Activated B cell treated with CpG ODN at 0.5 μM for 24 hours (primary cell): ENCODE measurements at regions of chr19 and their contacts with region 1.

Region 1: GRCh38 chr19:38335949-38336637 is 463 bp downstream of the CATSPERG start:
- DNase-seq: peak; percentile 91
- ATAC-seq: peak; percentile 64
- H3K4me3 Mint-ChIP-seq: peak overlapping the region; percentile 91
- H3K27ac Mint-ChIP-seq: peak overlapping the region; percentile 97
- H3K4me1 Mint-ChIP-seq: peaks cover 8% of the 10 kb centered on the region
- H3K27me3 Mint-ChIP-seq: no peaks in the 10 kb centered on the region
- CTCF ChIP-seq: no peak

Region 2: GRCh38 chr19:37920591-37921450 is 415.3 kb before region 1 on chr19:
- CTCF ChIA-PET with region 1: no interaction called
- POLR2A ChIA-PET with region 1: interaction called, 10 read pairs
- intact Hi-C with region 1: no loop called
- DNase-seq: no peak
- ATAC-seq: peak; percentile 20
- H3K4me3 Mint-ChIP-seq: peak overlapping the region; percentile 78
- H3K27ac Mint-ChIP-seq: peak overlapping the region; percentile 90
- H3K4me1 Mint-ChIP-seq: peaks cover 82% of the 10 kb centered on the region
- H3K27me3 Mint-ChIP-seq: no peaks in the 10 kb centered on the region
- CTCF ChIP-seq: no peak

Region 3: GRCh38 chr19:38229585-38230073 is 106.5 kb before region 1 on chr19:
- CTCF ChIA-PET with region 1: interaction called, 14 read pairs
- POLR2A ChIA-PET with region 1: interaction called, 3 read pairs
- intact Hi-C with region 1: loop called (anchors 1 kb)
- DNase-seq: peak; percentile 52
- ATAC-seq: peak; percentile 87
- H3K4me3 Mint-ChIP-seq: no peak overlapping the region
- H3K27ac Mint-ChIP-seq: no peak overlapping the region
- H3K4me1 Mint-ChIP-seq: peaks cover 21% of the 10 kb centered on the region
- H3K27me3 Mint-ChIP-seq: peaks cover 40% of the 10 kb centered on the region
- CTCF ChIP-seq: no peak

Region 4: DNA sequence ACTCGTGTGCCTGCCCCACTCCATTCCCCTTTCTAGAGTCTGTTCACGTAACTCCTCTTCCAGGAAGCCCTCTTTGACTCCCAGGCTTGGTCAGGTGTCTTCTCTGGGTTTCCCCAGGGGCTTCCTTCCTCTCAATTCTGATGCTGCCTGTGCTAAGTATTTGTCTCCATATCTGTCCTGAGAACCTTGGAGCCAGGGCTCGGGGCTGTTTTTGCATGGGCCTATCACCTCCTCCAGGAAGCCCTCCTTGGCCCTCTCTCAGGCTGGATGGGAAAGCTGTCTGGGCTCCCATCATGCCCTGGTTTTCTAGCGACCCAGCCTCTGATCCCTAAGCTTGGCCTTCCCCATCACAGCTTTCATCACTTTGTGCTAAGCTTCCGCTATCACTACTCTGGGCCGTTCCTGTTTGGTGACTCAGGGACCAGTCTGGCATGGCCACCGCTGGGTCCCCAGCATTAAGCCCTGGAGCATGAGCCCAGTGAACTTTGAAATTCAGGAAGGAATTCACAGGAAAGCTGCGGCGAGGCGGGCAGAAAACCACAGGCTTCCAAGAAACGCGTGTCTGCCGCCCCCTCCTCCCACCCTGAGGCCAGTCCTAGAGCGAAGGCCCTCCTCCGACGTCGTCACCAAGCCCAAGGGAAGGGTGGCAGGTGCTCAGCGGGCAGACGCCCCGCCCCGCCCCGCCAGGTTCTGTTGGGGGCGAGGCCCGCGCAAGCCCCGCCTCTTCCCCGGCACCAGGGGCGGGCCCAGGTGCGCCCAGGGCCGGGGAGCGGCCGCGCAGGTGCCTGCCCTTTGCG is 72.2 kb before region 1 on chr19:
- CTCF ChIA-PET with region 1: no interaction called
- POLR2A ChIA-PET with region 1: interaction called, 36 read pairs
- intact Hi-C with region 1: loop called (anchors 1 kb)
- DNase-seq: peak; percentile 86
- ATAC-seq: peak; percentile 89
- H3K4me3 Mint-ChIP-seq: peak overlapping the region; percentile 91
- H3K27ac Mint-ChIP-seq: peak overlapping the region; percentile 99
- H3K4me1 Mint-ChIP-seq: peaks cover 43% of the 10 kb centered on the region
- H3K27me3 Mint-ChIP-seq: no peaks in the 10 kb centered on the region
- CTCF ChIP-seq: no peak

Region 5: GRCh38 chr19:38350883-38351282 is 14.8 kb after region 1 on chr19:
- CTCF ChIA-PET with region 1: no interaction called
- POLR2A ChIA-PET with region 1: no interaction called
- intact Hi-C with region 1: no loop called
- DNase-seq: no peak
- ATAC-seq: no peak
- H3K4me3 Mint-ChIP-seq: no peak overlapping the region
- H3K27ac Mint-ChIP-seq: no peak overlapping the region
- H3K4me1 Mint-ChIP-seq: no peaks in the 10 kb centered on the region
- H3K27me3 Mint-ChIP-seq: peaks cover 6% of the 10 kb centered on the region
- CTCF ChIP-seq: no peak

Region 6: GRCh38 chr19:38361633-38362075 is 25.6 kb after region 1 on chr19:
- CTCF ChIA-PET with region 1: no interaction called
- POLR2A ChIA-PET with region 1: interaction called, 9 read pairs
- intact Hi-C with region 1: loop called (anchors 1 kb)
- DNase-seq: no peak
- ATAC-seq: peak; percentile 76
- H3K4me3 Mint-ChIP-seq: peak overlapping the region; percentile 85
- H3K27ac Mint-ChIP-seq: no peak overlapping the region
- H3K4me1 Mint-ChIP-seq: peaks cover 19% of the 10 kb centered on the region
- H3K27me3 Mint-ChIP-seq: peaks cover 7% of the 10 kb centered on the region
- CTCF ChIP-seq: no peak

Region 7: GRCh38 chr19:38387550-38388348 is 51.7 kb after region 1 on chr19 and contains the start of gene GGN:
- CTCF ChIA-PET with region 1: interaction called, 4 read pairs
- POLR2A ChIA-PET with region 1: interaction called, 5 read pairs
- intact Hi-C with region 1: loop called (anchors 1 kb)
- DNase-seq: peak; percentile 73
- ATAC-seq: peak; percentile 72
- H3K4me3 Mint-ChIP-seq: peak within 1 kb of the TSS; percentile 87
- H3K27ac Mint-ChIP-seq: peak within 1 kb of the TSS; percentile 42
- H3K4me1 Mint-ChIP-seq: peaks cover 25% of the 10 kb centered on the region
- H3K27me3 Mint-ChIP-seq: peaks cover 27% of the 10 kb centered on the region
- CTCF ChIP-seq: no peak
- total RNA-seq, gene GGN: 0.22 and 1.2 TPM in 2 replicates

Region 8: GRCh38 chr19:38559428-38560401 is 223.6 kb after region 1 on chr19:
- CTCF ChIA-PET with region 1: no interaction called
- POLR2A ChIA-PET with region 1: no interaction called
- intact Hi-C with region 1: no loop called
- DNase-seq: no peak
- ATAC-seq: peak; percentile 82
- H3K4me3 Mint-ChIP-seq: peak overlapping the region; percentile 75
- H3K27ac Mint-ChIP-seq: peak overlapping the region; percentile 90
- H3K4me1 Mint-ChIP-seq: peaks cover 57% of the 10 kb centered on the region
- H3K27me3 Mint-ChIP-seq: peaks cover 6% of the 10 kb centered on the region
- CTCF ChIP-seq: no peak

Region 9: DNA sequence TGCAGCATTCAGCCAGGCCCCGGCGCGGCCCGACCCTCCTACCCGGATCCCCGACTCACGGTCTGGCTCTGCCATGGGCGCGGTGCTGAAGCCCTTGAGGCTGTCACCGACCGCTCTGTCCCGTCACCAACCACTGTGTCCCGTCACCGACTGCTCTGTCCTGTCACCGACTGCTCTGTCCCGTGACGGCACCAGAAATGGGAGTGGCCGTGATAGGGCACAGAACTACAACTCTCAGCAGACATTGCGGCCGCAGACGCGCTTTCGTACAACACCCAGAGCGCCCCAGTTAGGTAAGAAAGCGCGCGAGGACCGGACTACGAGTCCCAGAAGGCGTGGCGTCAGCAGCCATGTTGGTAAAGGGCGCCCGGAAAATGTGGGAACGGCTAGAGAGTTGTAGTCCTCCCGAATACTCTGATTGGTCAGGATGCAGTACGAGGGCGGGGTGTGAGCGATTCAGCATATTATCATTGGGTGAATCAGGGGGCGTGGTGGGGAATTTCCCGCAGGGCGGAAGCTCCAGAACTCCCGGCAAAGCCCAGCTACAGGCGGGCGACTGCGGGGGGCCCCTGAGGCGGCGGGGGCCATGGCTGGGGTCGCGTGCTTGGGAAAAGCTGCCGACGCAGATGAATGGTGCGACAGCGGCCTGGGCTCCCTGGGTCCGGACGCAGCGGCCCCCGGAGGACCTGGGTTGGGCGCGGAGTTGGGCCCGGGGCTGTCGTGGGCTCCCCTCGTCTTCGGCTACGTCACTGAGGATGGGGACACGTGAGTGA is 563.5 kb after region 1 on chr19 and contains the starts of genes NFKBIB and SIRT2:
- CTCF ChIA-PET with region 1: no interaction called
- POLR2A ChIA-PET with region 1: no interaction called
- intact Hi-C with region 1: loop called (anchors 1 kb)
- DNase-seq: peak; percentile 91
- ATAC-seq: peak; percentile 91
- H3K4me3 Mint-ChIP-seq: peak within 1 kb of the TSS; percentile 91
- H3K27ac Mint-ChIP-seq: peak within 1 kb of the TSS; percentile 87
- H3K4me1 Mint-ChIP-seq: peaks cover 41% of the 10 kb centered on the region
- H3K27me3 Mint-ChIP-seq: no peaks in the 10 kb centered on the region
- CTCF ChIP-seq: no peak
- total RNA-seq, gene NFKBIB: 45.5 and 49.5 TPM in 2 replicates
- total RNA-seq, gene SIRT2: 28.4 and 32.7 TPM in 2 replicates